BJ (cell line): ENCODE measurements at regions of chr12 and their contacts with region 1.

Region 1: DNA sequence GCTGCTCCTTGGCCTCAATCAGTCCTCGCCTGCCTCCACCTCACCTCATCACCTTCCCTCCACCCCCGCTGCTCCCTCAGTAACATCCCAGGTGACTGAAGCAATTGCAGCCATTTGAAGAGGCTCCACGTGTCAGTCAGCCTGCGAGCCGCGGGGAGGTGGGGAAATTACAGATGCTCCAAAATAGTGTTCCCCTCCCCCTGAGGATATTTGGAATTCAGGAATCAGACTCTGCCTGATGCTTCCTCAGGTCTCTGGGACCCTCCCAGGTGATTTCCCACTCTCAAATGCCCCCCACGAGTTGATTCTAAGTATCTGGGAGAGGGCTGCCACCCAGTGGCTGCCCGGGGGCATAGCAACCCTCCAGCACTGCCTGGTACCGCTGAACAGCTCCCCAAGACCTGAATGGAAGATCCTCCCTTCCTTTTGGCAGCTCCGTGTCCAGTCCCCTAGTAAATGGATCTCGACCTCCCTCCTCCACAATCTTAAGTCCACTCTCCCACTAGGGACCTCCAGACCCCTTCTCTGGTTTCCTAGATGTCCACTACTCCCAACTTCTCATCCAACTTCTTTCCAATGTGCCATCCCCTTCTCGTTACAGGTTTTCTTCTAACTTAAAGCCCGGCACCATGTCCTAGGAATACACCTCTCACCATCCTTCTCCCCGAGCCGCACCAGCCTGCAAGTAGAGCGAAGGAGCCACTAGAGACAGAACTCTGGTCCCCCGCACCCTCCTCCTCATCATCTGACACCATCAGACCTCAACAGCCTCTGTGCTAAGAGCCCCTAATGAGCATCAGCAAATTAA is 1.4 kb upstream of the ASIC1 start:
- DNase-seq: no peak
- H3K4me3 ChIP-seq: no peak overlapping the region
- H3K27me3 ChIP-seq: peaks cover 21% of the 10 kb centered on the region
- CTCF ChIP-seq: peak; percentile 98

Region 2: DNA sequence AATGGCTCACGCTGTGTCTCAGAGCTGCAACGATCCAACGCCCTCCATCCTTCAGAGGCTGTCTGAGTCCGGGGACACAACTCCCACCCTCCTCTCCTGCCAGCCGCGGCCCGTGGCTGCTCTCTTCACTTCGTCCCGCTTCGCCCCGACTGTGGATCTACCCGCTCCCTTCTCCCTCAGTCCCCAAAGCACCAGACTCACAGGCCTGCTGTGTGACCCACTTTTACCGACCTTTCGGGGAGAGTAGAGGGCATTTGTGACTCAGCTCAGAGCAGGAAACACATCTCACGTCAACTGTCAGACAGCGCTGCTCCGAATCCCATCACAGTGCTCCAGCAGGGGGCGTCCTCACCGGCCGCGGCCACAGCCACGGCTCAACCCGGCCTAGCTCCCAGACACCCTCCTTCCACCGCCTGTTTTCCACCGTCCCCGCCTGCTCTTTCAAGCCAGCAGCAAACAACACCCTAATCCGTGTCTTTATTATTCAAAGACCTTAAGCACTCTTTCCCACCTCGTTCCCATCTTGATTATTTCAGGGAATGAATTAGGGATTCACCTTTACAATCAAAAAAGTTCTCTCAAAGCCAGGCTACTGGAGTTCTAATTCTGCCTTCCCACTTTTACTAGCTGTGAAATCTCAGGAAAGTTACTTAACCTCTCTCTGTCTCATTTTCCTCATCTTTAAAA is 110.5 kb before region 1 on chr12:
- CTCF ChIA-PET with region 1: interaction called, 14 read pairs
- POLR2A ChIA-PET with region 1: no interaction called
- DNase-seq: peak; percentile 9
- H3K4me3 ChIP-seq: no peak overlapping the region
- H3K27me3 ChIP-seq: peaks cover 5% of the 10 kb centered on the region
- CTCF ChIP-seq: peak; percentile 93

Region 3: GRCh38 chr12:49983892-49984291 is 72.1 kb before region 1 on chr12:
- CTCF ChIA-PET with region 1: interaction called, 19 read pairs
- POLR2A ChIA-PET with region 1: no interaction called
- DNase-seq: no peak
- H3K4me3 ChIP-seq: no peak overlapping the region
- H3K27me3 ChIP-seq: no peaks in the 10 kb centered on the region
- CTCF ChIP-seq: no peak

Region 4: DNA sequence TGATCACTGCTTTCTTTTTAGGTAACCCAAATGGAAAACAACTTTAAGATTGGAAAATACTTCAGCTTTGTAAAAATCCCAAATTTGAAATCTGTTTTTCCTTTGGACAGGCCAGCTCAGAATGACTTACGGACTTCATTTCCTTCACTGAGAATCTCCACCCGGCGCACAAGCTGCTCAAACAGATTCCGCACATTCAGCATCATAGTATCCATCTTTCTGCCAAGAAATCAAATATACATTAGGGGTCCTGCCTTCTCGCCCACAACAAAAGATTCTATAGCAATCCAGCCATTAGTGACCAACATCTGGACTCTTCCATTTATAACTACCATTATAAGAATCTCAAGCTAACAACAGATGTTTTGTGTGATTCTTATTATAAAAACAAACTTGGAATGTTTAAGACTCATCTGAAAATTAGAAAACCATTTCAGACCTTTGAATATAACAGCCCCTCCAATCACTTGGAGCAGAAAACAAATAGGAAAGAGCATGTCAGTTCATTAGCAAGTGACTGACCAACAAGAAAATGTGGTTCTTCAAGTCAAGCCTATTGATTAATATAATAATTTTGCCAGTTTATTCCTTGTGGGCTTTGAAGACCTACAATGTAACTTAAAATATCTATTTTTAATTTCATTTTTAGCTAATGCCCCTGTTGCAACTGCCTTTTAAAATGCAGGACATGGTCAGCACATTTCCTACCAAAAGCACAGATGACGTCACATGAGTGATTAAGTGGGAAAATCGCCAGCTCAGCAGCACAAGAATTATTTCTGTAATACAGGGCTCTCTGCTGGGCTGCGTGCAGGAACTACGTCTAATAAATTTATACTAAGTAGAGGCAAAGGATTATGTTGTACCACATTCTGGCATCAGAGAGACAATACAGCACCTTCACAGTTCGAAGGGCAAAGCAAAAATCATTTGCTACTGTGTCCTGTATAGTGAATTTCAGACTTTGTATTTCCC is 39.2 kb before region 1 on chr12:
- CTCF ChIA-PET with region 1: interaction called, 20 read pairs
- POLR2A ChIA-PET with region 1: no interaction called
- DNase-seq: peak; percentile 68
- H3K4me3 ChIP-seq: no peak overlapping the region
- H3K27me3 ChIP-seq: no peaks in the 10 kb centered on the region
- CTCF ChIP-seq: no peak

Region 5: DNA sequence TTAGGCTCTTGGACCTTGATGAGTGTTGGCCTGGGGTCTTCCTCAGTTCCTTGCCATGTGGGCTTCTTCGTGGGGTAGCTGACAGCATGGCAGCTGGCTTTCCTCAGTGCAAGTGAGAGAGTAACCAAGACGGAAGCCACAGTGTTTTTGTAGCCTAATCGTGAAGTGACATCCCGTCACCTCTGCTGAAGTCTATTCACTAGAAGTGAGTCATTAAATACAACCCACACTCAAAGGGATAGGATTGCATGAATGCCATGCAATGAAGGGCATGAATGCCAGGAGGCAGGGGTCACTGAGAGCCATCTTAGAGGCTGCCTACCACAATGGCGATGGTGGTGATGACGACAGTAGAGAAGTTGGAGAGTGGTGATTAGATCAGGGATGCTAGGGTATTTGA is 12.2 kb before region 1 on chr12:
- CTCF ChIA-PET with region 1: interaction called, 90 read pairs
- POLR2A ChIA-PET with region 1: no interaction called
- DNase-seq: no peak
- H3K4me3 ChIP-seq: no peak overlapping the region
- H3K27me3 ChIP-seq: peaks cover 2% of the 10 kb centered on the region
- CTCF ChIP-seq: no peak

Region 6: DNA sequence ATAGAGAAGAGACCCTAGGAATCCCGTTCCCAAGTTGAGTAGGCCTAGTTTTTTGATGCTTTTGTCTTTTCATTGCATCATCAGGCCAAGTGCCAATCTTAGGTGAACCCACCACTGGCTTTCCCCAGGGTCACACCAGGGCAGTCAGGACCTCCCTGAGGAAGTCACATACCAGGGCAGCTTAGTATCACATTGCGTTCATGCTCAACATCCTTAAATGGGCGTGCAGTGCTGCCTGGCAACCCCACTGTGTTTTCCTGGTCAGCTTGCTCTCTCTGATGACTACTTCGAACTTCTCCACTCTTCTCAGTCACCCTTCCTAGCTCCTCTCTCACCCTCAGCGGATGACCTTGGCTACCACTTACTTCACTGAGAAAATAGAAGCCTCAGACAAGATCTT is 10.4 kb after region 1 on chr12:
- CTCF ChIA-PET with region 1: interaction called, 42 read pairs
- POLR2A ChIA-PET with region 1: no interaction called
- DNase-seq: peak; percentile 80
- H3K4me3 ChIP-seq: no peak overlapping the region
- H3K27me3 ChIP-seq: no peaks in the 10 kb centered on the region
- CTCF ChIP-seq: no peak

Region 7: DNA sequence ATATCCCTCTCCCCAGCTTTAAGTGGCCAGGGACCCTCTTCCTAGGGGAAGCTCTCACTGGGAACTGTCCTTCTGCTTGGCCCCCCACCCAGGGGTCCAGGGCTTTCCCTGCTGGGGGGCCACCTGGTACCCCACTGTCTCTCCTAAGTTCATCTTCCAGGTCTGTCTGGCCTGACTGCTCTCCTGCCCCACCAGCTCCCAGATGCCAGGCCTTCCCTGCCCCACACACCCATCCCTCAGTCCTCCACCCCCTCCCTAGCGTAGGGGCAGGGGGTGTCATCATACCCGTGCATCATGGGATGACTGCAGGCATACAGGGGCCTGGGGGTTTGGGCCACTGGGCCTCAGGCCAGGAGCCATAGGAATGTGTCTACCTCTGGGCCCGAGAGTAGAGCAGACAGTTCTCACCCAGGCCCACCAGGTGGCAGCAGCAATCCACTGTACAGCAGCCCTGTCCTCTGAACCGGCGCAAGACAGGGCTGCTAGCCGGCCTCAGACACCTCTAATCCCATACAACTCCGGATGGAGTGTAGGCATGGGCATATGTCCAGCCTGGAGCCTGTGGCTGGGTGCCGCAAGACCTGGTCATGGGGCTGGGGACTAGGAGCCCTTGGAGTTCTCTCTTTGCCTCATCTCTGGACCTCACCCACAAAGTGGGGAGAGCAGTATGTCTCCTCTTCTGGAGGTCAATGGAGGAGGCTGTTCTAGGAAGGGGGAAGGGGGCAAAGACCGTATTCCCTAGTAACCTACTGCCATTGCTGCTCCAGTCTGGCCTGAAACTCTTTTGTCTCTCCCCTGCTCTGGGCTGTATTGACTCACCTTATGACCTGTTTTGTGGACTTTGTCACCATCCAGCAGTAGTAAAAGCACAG is 19.1 kb after region 1 on chr12:
- CTCF ChIA-PET with region 1: interaction called, 25 read pairs
- POLR2A ChIA-PET with region 1: no interaction called
- DNase-seq: no peak
- H3K4me3 ChIP-seq: no peak overlapping the region
- H3K27me3 ChIP-seq: no peaks in the 10 kb centered on the region
- CTCF ChIP-seq: peak; percentile 91